ENCODE measurements at regions of chr12 and their contacts with region 1.

Region 1: DNA sequence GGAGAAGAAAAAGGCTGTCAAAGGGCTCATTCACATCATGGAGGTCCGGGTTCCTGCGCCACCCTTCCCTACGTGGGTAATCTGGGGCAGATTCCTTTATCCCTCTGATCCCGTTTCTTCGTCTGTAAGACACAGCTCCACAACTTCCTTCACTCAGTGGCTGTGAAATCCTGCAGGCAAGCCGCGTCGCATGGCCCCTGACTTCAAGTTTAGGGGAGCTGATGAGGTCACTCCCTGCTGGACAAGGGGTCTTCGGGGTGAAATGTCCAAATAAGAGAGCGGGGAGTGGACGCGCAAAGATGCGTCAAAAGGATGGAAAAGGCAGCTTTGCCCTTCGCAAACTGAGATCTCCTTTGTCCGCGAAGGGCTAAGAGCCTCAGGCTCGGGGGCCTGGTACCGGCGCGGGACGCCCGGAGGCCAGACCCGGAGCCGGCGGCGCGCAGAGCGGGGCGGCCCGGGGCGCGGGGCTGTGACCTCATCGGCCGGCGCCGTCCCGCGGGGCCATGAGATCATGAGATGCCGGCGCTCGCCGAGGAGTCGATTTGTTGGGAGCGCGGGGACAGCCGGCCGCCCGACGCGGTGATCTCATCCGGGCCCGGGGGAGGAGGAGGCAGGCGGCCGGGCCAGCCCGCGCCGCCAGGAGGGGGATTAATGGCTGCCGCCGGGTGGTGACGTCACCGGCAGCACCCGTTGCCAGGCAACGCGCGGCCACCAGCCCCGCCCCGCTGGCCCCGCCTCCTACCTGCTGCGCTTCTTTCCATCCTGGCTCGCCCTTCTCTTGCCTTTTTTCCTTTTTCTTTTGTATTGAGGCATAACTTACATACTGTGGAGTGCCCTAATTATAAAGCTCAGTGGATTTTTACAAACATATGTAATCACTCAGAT is 62.1 kb downstream of the HRK start:
- DNase-seq: peak; percentile 91 to 92
- ATAC-seq: peak; percentile 96 to 98 (median 97)
- H3K4me3 ChIP-seq: peak overlapping the region; percentile 23 to 87 (median 72)
- H3K27ac ChIP-seq: peak overlapping the region; percentile 77 to 97 (median 94)
- H3K4me1 ChIP-seq: peaks cover 6 to 17% (median 12%) of the 10 kb centered on the region in 9 donors
- H3K27me3 ChIP-seq: no peaks in the 10 kb centered on the region
- CTCF ChIP-seq: peak in 2 of 9 donors; percentile 20 to 34

Region 2: DNA sequence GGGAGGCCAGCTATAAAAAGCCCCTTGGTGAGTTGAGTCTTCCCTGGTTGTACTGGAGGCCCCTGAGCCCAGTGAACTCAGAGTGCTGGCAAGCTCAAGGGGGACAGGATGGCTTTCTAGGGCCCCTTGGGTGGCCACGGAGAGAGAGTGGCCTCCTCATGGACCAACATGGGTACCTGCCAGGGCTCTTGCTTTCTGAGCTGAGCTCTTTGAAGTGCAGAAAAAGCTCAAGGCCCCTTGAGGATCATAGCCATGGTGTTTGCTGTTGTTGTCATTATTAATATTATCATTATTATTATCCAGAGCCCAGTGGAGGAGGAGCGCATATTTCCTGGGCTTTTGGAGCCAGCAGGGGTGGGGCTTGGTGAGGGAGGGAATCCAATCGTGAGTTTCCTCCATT is 74.4 kb before region 1 on chr12:
- intact Hi-C with region 1: loop called in 7 of 10 experiments (anchors 2 to 10 kb)
- DNase-seq: no peak
- ATAC-seq: no peak
- H3K4me3 ChIP-seq: no peak overlapping the region
- H3K27ac ChIP-seq: no peak overlapping the region
- H3K4me1 ChIP-seq: no peaks in the 10 kb centered on the region
- H3K27me3 ChIP-seq: no peaks in the 10 kb centered on the region
- CTCF ChIP-seq: no peak

Region 3: DNA sequence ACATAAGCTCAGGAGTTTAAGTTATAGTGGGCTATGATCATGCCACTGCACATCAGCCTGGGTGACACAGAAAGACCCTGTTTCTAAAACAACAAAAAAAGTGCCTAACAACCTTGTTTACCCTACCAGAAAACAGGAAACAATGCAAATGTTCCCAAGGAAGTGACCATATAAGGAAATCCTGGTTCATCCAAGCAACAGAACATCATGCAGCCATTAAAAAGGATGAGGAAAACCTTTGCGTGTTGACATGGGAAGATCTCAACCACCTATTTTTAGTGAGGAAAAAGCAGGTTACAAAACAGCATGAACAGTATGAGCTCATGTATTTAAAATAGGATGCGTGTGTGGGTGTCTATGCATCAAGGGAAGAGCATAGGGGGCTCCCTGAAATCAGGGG is 48.3 kb after region 1 on chr12:
- intact Hi-C with region 1: no loop called
- DNase-seq: no peak
- ATAC-seq: no peak
- H3K4me3 ChIP-seq: no peak overlapping the region
- H3K27ac ChIP-seq: no peak overlapping the region
- H3K4me1 ChIP-seq: no peaks in the 10 kb centered on the region
- H3K27me3 ChIP-seq: peaks cover 0 to 9% (median 0%) of the 10 kb centered on the region in 7 donors
- CTCF ChIP-seq: no peak